A673 (cell line): ENCODE measurements at regions of chr10 and their contacts with region 1.

Region 1: DNA sequence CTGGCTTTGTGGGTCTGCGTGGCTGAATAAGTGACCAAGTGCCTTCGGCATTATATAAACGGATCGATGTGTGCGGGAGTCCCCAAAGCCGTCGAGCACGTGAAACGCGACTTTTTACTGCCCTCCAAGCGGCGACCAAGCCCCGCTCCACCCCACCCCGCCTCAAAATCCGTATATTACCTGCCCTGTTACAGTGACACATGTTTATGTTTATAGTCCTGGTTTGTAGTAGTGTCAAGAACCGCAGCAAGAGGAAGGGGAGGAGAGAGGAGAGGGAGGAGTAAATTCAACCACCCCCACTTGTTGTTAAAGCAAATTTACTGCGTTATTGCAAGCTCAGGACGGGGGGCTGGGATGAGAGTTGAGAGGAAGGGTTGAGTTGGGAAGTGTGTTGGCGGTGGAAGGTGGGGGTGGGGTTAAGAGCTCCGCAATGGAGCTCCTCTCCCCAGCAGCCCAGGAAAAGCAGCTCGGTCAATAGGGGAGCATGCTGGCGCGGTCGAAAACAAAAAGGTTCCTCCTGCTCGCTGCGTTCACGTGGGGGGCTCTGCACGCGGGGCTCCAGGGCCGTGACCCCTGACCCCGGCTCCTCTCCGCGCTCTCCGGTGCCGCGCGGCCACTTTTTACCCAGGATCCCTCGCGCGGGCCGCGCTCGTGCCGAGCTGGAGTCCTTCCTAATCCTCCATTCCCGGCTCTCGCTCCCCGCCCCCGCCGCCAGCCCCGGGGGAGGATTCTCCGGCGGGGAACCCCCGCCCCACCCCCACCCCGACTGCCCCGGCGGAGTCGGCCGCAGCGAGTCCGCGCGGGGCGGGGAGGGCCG is at the start of gene SKIDA1:
- DNase-seq: peak; percentile 97
- H3K4me3 ChIP-seq: peak within 1 kb of the TSS; percentile 63
- H3K27ac ChIP-seq: peak within 1 kb of the TSS; percentile 99
- H3K4me1 ChIP-seq: peaks cover 49% of the 10 kb centered on the region
- H3K27me3 ChIP-seq: no peaks in the 10 kb centered on the region
- CTCF ChIP-seq: no peak
- total RNA-seq, gene SKIDA1: 4.4 and 4.9 TPM in 2 replicates

Region 2: DNA sequence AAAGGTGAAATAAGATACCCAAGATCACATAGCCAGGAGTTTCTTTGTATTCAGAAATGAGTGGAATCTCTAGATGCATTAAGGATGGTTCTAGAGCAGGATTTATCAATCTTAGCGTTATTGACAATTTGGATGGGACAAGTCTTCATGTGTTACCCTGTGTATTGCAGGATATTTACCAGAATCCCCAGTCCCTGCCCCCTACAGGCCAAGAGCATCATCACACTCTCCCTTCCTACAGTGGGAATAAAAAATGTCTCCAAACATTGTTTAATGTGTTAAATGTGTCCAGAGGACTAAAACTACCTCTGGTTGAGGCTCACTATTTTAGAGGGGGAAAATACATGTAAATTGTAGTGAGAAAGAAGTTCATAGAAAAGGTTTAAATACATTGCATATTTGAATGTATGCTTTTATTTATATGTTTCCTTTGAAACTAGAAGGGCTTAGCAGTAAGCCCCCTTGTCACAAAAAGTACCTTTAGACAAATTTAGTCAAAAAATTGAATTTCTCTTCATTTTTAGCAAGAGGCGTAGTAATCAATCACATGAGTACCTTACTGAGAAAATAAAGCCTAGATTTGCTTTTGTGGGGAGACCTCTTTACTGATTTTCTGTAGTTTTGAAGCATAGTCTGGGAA is 149.7 kb after region 1 on chr10:
- CTCF ChIA-PET with region 1: no interaction called
- POLR2A ChIA-PET with region 1: no interaction called
- intact Hi-C with region 1: no loop called
- DNase-seq: peak; percentile 73
- H3K4me3 ChIP-seq: no peak overlapping the region
- H3K27ac ChIP-seq: no peak overlapping the region
- H3K4me1 ChIP-seq: no peaks in the 10 kb centered on the region
- H3K27me3 ChIP-seq: no peaks in the 10 kb centered on the region
- CTCF ChIP-seq: peak; percentile 92

Region 3: GRCh38 chr10:21705142-21705827 is 179.7 kb after region 1 on chr10:
- CTCF ChIA-PET with region 1: no interaction called
- POLR2A ChIA-PET with region 1: no interaction called
- intact Hi-C with region 1: no loop called
- DNase-seq: no peak
- H3K4me3 ChIP-seq: no peak overlapping the region
- H3K27ac ChIP-seq: no peak overlapping the region
- H3K4me1 ChIP-seq: no peaks in the 10 kb centered on the region
- H3K27me3 ChIP-seq: no peaks in the 10 kb centered on the region
- CTCF ChIP-seq: no peak

Region 4: DNA sequence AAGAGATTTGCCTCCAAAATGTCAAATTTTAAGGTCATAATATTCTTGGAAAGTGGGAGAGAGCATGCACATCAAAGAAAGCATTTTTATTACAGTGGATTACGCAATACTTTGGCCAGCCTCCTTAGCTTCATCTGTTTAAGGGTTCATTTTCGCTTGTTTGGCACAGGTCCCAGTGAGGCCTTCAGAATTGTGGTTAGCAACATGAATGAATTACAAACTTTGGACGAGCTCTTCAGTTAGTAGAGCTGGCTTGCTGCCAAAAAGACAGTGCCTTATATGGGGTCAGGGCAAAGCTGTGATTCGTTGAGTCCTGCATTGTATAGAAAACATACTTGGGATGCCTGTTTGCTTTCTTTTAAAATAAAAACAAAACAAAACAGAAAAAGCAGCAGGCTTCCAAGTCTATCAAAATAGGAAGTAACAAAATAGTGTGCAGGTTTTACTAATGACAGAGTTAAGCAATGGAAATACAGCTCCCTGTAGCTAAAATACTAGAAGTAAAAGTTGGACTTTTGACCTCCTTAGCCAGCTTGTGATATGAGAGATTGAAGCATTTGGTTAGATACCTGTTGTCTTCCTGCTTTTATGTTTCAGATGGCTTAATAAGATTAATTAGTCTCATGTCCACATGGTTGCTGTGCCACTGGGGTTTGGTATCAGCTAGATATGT is 199.3 kb after region 1 on chr10:
- CTCF ChIA-PET with region 1: interaction called, 11 read pairs
- POLR2A ChIA-PET with region 1: no interaction called
- intact Hi-C with region 1: loop called (anchors 5 kb)
- DNase-seq: peak; percentile 99
- H3K4me3 ChIP-seq: peak overlapping the region; percentile 17
- H3K27ac ChIP-seq: peak overlapping the region; percentile 64
- H3K4me1 ChIP-seq: peaks cover 88% of the 10 kb centered on the region
- H3K27me3 ChIP-seq: no peaks in the 10 kb centered on the region
- CTCF ChIP-seq: no peak